Dorsolateral prefrontal cortex (tissue), 120 donors: ENCODE measurements at regions of chrX and their contacts with region 1.

Region 1: DNA sequence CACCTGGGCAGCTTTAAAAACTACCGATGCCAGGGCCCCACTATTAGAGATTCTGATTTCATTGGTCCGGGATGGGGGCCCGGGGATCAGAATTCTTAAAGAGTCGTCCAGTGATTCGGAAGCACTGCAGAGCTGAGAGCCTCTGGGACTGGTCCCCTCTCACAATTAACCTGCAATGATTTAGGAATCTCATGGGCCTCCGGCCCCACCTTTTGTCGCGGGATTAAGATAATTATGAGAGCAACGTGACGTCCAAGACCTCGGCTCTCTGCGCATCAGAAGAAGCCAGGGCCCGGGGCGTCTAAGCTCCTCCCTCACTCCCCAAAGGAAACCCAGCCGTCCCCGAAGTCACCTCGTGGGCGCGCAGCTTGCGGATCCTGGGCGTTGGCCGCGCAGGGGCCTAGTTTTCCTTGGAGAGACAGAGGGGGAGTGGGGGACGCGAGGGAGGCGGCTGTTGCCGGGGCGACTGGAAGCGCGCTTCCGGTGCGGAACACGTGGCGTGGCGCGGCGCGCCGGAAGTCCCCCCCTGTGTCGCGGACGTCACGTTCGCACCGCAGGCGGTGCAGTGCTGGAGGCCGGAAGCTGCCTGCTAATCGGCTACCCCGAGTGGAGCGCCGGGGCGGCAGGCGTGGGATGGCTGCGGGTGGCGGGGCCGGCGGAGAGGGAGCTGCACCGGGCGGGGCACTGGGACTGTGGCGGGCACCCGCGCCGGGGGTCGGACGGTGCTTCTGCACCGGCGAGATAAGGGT is at the start of gene GEMIN8:
- DNase-seq: peak; percentile 73 to 91 (median 83)
- H3K4me3 ChIP-seq: peak within 1 kb of the TSS; percentile 43 to 82 (median 70)
- H3K27ac ChIP-seq: peak within 1 kb of the TSS; percentile 27 to 95 (median 87)
- H3K27me3 ChIP-seq: peaks cover 0 to 47% (median 7%) of the 10 kb centered on the region in 45 donors
- CTCF ChIP-seq: peak in 14 of 56 donors; percentile 7 to 48 (median 21)
- total RNA-seq, gene GEMIN8: 9.8 to 42.5 (median 21.9) TPM

Region 2: DNA sequence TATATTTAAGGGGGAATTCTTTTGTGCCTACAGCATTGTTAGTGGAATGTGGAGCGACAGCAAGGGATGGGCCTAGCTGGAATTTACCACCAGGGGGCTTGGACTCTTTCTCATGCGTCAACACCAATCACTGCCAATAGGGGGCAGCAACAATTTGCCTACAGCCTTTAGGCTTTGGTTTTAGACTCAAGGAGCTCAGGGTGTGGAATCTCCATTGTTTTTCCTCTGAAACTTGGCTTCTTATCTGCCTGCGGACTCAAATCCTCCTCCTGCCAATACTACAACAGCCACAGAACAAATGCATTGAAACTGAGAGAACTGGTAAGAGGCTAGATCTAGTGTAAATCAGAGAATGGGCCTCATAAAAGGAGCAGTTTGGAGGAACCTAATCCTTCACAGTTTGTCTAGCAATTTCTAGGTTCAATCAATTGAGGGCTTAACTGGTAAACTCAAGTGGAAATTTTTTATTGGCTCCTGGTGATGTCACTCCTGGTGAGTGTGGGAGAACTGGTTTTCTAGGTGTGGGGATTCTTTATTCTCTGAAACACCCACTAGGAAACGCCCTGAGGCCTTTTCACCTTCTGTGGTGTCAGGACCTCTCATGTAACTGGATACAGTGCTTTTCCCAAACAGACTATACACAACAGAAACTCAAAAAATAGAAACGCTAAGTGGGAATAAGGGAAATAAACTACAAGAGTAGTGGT is 1082.6 kb before region 1 on chrX:
- intact Hi-C with region 1: loop called in 1 of 2 experiments (anchors 5 kb)
- DNase-seq: peak in 3 of 10 donors; percentile 38 to 45 (median 44)
- H3K4me3 ChIP-seq: no peak overlapping the region
- H3K27ac ChIP-seq: peak overlapping the region in 3 of 59 donors; percentile 9 to 45 (median 28)
- H3K27me3 ChIP-seq: peaks cover 0 to 41% (median 4%) of the 10 kb centered on the region in 45 donors
- CTCF ChIP-seq: peak; percentile 42 to 93 (median 83)

Region 3: DNA sequence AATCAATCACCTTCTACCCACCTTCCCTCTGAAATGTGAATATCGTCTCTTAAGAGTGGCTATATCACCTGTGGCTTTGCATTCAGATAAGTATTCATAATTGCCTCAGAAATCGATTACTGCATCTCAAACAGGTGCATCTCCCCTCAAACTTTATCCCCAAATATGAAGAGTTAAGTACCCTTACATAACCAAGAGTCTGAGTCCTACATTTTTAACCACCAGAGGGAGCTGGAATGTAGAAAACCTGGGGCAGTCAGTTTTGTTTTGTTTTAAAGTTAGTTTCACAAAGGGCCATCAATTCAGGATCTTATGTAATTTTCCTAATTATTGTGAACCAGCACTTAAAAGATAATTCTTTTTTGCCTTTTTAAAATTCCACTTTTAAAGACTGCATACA is 371.0 kb before region 1 on chrX:
- intact Hi-C with region 1: loop called (anchors 2 kb)
- DNase-seq: no peak
- H3K4me3 ChIP-seq: peak overlapping the region in 2 of 59 donors; percentile 6 to 10
- H3K27ac ChIP-seq: peak overlapping the region in 44 of 59 donors; percentile 1 to 76 (median 39)
- H3K27me3 ChIP-seq: peaks cover 0 to 39% (median 0%) of the 10 kb centered on the region in 45 donors
- CTCF ChIP-seq: peak; percentile 38 to 94 (median 84)

Region 4: DNA sequence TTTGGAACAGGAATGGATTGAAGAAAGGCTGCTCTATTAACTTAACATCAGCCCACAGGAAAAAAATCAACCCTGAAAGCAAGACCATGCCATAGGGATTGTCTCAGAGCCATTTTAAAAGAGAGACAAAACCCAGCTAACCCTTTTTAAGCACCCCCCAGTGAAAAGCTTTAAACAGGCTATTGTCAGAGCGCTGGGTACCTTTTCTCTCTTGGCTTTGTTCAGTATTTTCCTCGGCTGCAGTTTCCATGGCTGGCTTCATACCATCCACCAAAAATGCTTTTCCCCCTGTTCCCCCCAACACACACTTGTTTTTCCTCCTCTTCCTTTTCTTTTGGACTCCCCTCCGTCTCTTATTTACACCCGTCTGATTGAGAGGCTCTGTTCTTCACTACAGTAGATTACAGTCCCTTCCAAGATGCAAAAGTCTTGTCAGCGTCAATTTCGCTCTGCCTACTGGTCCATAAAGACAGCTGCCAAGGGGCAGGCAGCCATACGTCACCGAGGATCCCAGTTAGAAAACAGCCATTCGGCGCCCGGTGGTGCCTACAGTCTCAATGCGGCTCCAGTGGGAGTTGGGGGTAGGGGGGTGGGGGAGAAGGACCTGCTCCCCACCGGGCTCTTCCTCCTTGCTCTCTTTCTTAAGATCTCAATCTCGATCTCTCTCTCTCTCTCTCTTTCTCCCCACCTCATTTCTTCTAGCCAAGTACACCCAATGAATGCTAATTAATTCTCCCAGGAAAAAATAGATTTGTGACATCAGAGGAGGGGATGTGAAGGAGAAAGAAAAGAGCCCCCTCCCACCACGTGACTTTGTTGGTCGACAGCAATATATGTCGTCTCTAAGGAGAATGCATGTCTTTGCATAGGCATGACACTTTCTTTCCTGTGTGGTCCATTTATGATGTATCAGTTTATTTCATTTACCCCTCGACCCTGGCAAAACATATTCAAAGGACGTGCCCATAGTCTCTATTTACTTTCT is 212.7 kb before region 1 on chrX and contains the start of gene GPM6B:
- intact Hi-C with region 1: loop called in 1 of 2 experiments (anchors 10 kb)
- DNase-seq: peak; percentile 33 to 72 (median 64)
- H3K4me3 ChIP-seq: peak within 1 kb of the TSS; percentile 23 to 69 (median 52)
- H3K27ac ChIP-seq: peak within 1 kb of the TSS; percentile 3 to 90 (median 78)
- H3K27me3 ChIP-seq: peaks cover 0 to 63% (median 11%) of the 10 kb centered on the region in 45 donors
- CTCF ChIP-seq: no peak
- total RNA-seq, gene GPM6B: 509 to 1,404 (median 816) TPM

Region 5: DNA sequence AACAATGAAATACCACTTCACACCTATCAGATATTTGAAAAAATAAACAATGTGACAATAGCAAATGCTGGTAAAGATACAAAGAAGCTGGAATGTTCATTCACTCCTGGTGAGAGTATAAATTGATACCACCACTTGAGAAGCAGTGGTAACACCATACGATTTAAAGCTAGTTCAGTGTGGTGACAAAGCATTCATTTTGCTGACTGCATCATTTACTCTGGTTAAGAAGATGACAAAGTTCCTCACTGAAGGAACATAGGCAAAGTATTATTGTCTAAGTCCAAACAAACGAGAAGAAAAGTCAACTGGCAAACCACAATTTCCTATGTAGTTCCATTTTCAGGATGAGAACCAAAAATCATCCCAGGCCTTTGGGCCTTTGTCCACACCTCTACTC is 102.4 kb before region 1 on chrX:
- intact Hi-C with region 1: no loop called
- DNase-seq: no peak
- H3K4me3 ChIP-seq: peak overlapping the region in 1 of 59 donors; percentile 1
- H3K27ac ChIP-seq: peak overlapping the region in 49 of 59 donors; percentile 0 to 97 (median 52)
- H3K27me3 ChIP-seq: peaks cover 0 to 44% (median 0%) of the 10 kb centered on the region in 45 donors
- CTCF ChIP-seq: no peak

Region 6: GRCh38 chrX:13938051-13938828 is 91.4 kb before region 1 on chrX:
- intact Hi-C with region 1: loop called (anchors 2 kb)
- DNase-seq: peak in 6 of 10 donors; percentile 33 to 66 (median 40)
- H3K4me3 ChIP-seq: peak overlapping the region; percentile 39 to 82 (median 70)
- H3K27ac ChIP-seq: peak overlapping the region; percentile 51 to 98 (median 94)
- H3K27me3 ChIP-seq: peaks cover 0 to 88% (median 48%) of the 10 kb centered on the region in 45 donors
- CTCF ChIP-seq: peak in 2 of 56 donors; percentile 11 to 14

Region 7: GRCh38 chrX:13994104-13994503 is 35.5 kb before region 1 on chrX:
- intact Hi-C with region 1: loop called in 1 of 2 experiments (anchors 5 kb)
- DNase-seq: peak in 9 of 10 donors; percentile 9 to 82 (median 73)
- H3K4me3 ChIP-seq: peak overlapping the region in 22 of 59 donors; percentile 2 to 46 (median 18)
- H3K27ac ChIP-seq: peak overlapping the region; percentile 37 to 95 (median 87)
- H3K27me3 ChIP-seq: peaks cover 0 to 46% (median 1%) of the 10 kb centered on the region in 45 donors
- CTCF ChIP-seq: peak in 1 of 56 donors; percentile 10